ENCODE measurements at regions of chr19 and their contacts with region 1.

Region 1: GRCh38 chr19:44093931-44094765 is at the start of gene ZNF224:
- DNase-seq: peak; percentile 62 to 92 (median 74)
- ATAC-seq: peak; percentile 88
- H3K4me3 ChIP-seq: peak within 1 kb of the TSS; percentile 91
- H3K4me3 Mint-ChIP-seq: peak within 1 kb of the TSS; percentile 96
- H3K27ac ChIP-seq: peak within 1 kb of the TSS; percentile 30 to 79
- H3K27ac Mint-ChIP-seq: peak within 1 kb of the TSS; percentile 69
- H3K4me1 ChIP-seq: peaks cover 6% of the 10 kb centered on the region
- H3K4me1 Mint-ChIP-seq: peaks cover 24% of the 10 kb centered on the region
- H3K27me3 ChIP-seq: no peaks in the 10 kb centered on the region
- H3K27me3 Mint-ChIP-seq: no peaks in the 10 kb centered on the region
- CTCF ChIP-seq: no peak
- total RNA-seq, gene ZNF224: 21.3 to 23.9 TPM

Region 2: DNA sequence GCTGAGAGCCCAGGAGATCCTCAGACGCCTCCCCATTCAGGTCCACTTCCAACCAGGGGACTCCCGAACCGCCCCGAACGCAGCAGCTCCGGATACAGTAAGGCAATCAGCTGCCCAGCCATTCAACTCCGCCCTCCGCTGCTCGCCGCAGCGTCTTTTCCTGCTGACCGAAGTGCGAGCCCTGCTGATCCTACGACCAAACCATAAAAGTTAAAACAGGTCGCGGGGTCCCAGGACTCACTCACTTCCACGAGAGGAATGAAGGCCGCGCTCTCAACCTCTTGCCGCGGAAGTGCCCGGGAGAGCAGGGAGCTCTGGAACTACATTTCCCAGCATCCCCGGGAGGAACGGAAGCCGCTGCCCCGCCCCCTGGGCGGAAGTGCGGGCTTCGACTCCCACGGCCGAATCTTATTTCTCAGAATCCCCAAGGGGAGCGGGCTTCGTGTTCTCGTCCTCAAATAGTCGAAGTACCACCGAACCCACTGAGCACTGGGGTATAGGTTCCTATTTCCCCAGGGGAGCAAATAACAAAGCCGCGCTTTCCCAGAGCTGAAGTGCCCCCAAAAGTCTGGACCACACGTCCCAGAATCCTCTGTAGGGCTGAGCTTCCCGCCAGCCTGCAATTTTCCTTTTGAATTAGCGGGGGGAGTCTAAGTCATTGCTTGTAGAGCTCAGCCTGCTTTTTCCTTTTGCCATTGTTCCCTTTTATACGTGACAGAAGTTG is 159.0 kb before region 1 on chr19 and contains the start of gene ZNF45:
- CTCF ChIA-PET with region 1: no interaction called
- POLR2A ChIA-PET with region 1: interaction called, 10 read pairs
- intact Hi-C with region 1: loop called (anchors 2 to 5 kb)
- DNase-seq: peak; percentile 75 to 94 (median 82)
- ATAC-seq: peak; percentile 95
- H3K4me3 ChIP-seq: peak within 1 kb of the TSS; percentile 78
- H3K4me3 Mint-ChIP-seq: peak within 1 kb of the TSS; percentile 96
- H3K27ac ChIP-seq: peak within 1 kb of the TSS; percentile 56 to 64
- H3K27ac Mint-ChIP-seq: peak within 1 kb of the TSS; percentile 86
- H3K4me1 ChIP-seq: peaks cover 10% of the 10 kb centered on the region
- H3K4me1 Mint-ChIP-seq: peaks cover 25% of the 10 kb centered on the region
- H3K27me3 ChIP-seq: no peaks in the 10 kb centered on the region
- H3K27me3 Mint-ChIP-seq: no peaks in the 10 kb centered on the region
- CTCF ChIP-seq: no peak
- total RNA-seq, gene ZNF45: 4.0 to 4.6 TPM

Region 3: DNA sequence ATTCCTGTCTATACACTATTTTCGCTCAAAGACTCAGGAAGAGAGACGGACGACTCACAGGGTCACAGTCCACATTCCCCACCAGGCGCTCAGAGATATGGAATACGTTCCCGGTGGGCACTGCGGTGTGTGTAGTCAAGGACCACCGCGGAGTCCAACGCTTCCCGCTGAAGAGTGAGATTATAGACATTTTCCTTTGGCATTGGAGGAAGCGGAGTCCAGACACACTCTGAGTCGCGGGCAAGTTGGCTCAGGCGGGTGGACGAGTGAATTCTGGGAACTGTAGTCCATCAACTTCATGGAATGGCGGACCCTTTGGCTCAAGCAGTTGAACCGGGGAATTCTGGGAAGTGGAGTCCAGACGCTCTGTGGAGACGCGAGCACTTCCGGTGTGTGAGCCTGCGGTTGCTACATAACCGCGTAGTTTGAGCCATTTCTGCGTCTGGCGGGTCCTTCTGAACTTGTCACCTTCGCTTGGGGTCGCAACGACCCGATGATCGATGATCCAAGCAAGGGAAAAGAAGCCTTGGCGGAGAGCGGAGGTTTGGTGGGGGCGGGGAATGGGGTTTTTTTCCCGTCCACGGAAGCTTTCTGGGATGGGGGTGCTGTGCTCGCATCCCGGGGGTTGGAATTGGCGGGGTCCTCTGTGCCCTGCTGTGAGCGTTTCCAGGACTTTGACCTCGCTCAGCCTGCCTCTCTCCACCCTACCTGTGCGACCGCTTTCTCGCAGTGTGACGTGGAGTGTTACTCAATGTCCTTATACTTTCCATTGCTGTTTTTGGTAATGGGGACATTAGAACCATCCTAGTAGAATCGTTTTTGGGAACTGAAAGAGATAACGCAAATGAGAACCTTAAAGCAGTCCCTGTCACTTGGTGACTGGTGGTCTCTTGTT is 91.3 kb before region 1 on chr19 and contains the start of gene ZNF230:
- CTCF ChIA-PET with region 1: interaction called, 3 read pairs
- POLR2A ChIA-PET with region 1: no interaction called
- intact Hi-C with region 1: loop called (anchors 2 to 5 kb)
- DNase-seq: peak; percentile 56 to 96 (median 75)
- ATAC-seq: peak; percentile 97
- H3K4me3 ChIP-seq: peak within 1 kb of the TSS; percentile 84
- H3K4me3 Mint-ChIP-seq: peak within 1 kb of the TSS; percentile 100
- H3K27ac ChIP-seq: peak within 1 kb of the TSS; percentile 39 to 53
- H3K27ac Mint-ChIP-seq: peak within 1 kb of the TSS; percentile 90
- H3K4me1 ChIP-seq: peaks cover 18% of the 10 kb centered on the region
- H3K4me1 Mint-ChIP-seq: peaks cover 29% of the 10 kb centered on the region
- H3K27me3 ChIP-seq: no peaks in the 10 kb centered on the region
- H3K27me3 Mint-ChIP-seq: no peaks in the 10 kb centered on the region
- CTCF ChIP-seq: no peak
- total RNA-seq, gene ZNF230: 2.2 to 2.8 TPM

Region 4: DNA sequence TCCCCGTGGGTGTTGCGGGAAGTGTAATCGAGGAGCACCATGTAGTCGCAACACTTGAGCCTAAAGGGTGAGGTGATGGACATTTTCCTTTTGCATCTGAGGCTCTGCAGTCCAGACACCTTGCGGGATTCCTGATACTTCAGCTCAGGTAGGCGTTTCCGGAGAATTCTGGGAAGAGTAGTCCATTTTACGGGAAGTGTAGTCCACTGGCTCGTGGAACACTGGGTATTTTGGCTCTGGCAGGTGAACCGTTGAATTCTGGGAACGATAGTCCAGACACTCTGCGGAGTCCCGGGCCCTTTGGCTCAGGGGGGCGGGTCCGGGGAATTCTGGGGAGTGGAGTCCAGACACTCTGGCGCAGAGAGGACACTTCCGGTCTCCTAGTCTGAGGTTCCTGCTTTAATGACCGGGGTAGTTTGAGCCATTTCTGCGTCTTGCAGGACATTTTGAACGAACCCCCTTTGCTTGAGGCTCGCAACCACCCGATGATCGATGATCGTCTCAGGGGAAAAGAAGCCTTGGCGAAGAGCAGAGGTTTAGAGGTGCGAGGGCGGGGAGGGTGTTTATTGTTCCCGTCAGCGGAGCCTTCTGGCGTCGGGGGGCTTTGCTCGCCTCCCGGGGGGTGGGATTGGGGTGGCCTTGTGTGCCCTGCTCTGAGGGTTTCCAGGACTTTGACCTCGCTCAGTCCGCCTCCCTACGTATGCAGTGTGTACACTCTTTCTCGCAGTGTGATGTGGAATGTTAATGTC is 42.3 kb before region 1 on chr19 and contains the start of gene ZNF223:
- CTCF ChIA-PET with region 1: no interaction called
- POLR2A ChIA-PET with region 1: no interaction called
- intact Hi-C with region 1: loop called in 1 of 2 experiments (anchors 5 kb)
- DNase-seq: peak; percentile 30 to 85 (median 65)
- ATAC-seq: peak; percentile 79
- H3K4me3 ChIP-seq: peak within 1 kb of the TSS; percentile 61
- H3K4me3 Mint-ChIP-seq: peak within 1 kb of the TSS; percentile 93
- H3K27ac ChIP-seq: no peak within 1 kb of the TSS
- H3K27ac Mint-ChIP-seq: peak within 1 kb of the TSS; percentile 40
- H3K4me1 ChIP-seq: peaks cover 17% of the 10 kb centered on the region
- H3K4me1 Mint-ChIP-seq: peaks cover 33% of the 10 kb centered on the region
- H3K27me3 ChIP-seq: no peaks in the 10 kb centered on the region
- H3K27me3 Mint-ChIP-seq: peaks cover 19% of the 10 kb centered on the region
- CTCF ChIP-seq: no peak
- total RNA-seq, gene ZNF223: 0.67 to 1.1 TPM

Region 5: DNA sequence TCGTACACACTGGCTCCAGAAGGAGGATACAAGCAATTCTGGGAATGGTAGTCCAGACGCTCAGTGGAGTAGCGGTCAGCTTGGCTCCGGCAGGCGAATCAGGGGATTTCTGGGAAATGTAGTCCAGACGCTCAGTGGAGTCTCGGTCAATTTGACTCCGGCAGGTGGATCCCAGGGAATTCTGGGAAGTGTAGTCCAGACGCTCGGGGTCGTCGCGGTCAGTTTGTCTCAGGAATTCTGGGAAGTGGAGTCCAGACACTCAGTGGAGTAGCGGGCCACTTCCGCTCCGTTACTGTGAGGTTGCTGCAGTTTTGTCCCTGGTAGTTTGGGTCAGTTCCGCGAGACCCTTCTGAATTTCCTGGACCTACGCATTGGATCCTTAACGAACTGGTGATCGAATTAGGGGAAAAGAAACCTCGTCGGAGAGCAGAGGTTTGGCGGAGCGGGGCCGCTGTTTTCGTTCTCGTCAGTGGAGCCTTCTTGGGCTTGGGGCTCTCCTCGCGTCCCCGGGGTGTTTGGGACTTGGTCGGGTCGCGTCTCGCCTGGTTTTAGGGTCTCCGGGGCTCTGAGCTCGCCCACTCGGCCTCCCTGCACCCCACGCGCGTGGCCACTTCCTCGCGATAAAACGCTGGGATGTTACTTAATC is 19.1 kb after region 1 on chr19 and contains the start of gene ZNF225:
- CTCF ChIA-PET with region 1: interaction called, 8 read pairs
- POLR2A ChIA-PET with region 1: interaction called, 18 read pairs
- intact Hi-C with region 1: loop called in 1 of 2 experiments (anchors 2 kb)
- DNase-seq: peak; percentile 55 to 94 (median 72)
- ATAC-seq: peak; percentile 89
- H3K4me3 ChIP-seq: peak within 1 kb of the TSS; percentile 75
- H3K4me3 Mint-ChIP-seq: peak within 1 kb of the TSS; percentile 95
- H3K27ac ChIP-seq: peak within 1 kb of the TSS in 1 of 2 donors; percentile 29
- H3K27ac Mint-ChIP-seq: peak within 1 kb of the TSS; percentile 57
- H3K4me1 ChIP-seq: peaks cover 17% of the 10 kb centered on the region
- H3K4me1 Mint-ChIP-seq: peaks cover 37% of the 10 kb centered on the region
- H3K27me3 ChIP-seq: no peaks in the 10 kb centered on the region
- H3K27me3 Mint-ChIP-seq: no peaks in the 10 kb centered on the region
- CTCF ChIP-seq: no peak
- total RNA-seq, gene ZNF225: 0.71 to 0.73 TPM

Region 6: DNA sequence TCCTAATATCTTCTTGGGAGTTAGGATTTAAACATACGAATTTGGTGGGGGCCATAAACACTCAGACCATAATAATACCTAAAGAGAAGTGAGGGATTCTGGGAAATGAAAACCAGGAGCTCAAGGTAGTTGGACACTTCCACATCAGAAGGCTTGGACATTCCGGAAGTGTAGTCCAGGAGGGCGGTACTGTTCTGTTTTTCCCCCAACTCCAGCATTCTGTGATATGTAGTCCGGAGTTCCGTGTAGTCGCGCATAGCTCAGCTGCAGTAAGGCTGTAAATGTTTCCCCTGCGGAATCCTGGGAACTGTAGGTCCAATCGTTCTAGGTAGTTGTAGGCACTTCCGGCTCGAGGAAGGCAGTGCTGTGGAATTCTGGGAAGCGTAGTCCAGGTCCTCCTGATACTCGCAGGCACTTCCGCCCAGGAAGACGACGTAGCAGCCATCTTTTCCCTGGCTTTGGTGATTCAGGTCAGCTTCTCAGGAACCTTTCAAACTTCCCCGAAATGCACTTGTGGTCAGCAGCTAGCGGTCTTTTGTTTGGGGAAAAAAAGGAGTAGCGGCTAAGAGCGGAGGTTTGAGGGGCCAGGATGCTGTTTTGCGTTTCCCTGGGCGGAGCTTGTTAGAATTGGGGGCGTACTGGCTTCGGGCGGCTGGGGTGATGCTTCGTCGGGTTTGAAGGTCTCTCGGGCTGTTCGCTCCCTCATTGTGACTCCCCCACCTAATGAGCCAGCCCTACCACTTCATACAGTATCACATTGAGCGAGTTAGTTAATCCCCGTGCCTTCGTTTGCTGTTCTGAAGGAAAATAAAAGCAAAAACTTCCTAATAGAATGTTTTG is 70.7 kb after region 1 on chr19 and contains the start of gene ZNF226:
- CTCF ChIA-PET with region 1: interaction called, 3 read pairs
- POLR2A ChIA-PET with region 1: interaction called, 5 read pairs
- intact Hi-C with region 1: loop called in 1 of 2 experiments (anchors 1 kb)
- DNase-seq: peak; percentile 59 to 95 (median 71)
- ATAC-seq: peak; percentile 94
- H3K4me3 ChIP-seq: peak within 1 kb of the TSS; percentile 86
- H3K4me3 Mint-ChIP-seq: peak within 1 kb of the TSS; percentile 99
- H3K27ac ChIP-seq: peak within 1 kb of the TSS; percentile 72 to 88
- H3K27ac Mint-ChIP-seq: peak within 1 kb of the TSS; percentile 98
- H3K4me1 ChIP-seq: peaks cover 19% of the 10 kb centered on the region
- H3K4me1 Mint-ChIP-seq: peaks cover 32% of the 10 kb centered on the region
- H3K27me3 ChIP-seq: no peaks in the 10 kb centered on the region
- H3K27me3 Mint-ChIP-seq: no peaks in the 10 kb centered on the region
- CTCF ChIP-seq: no peak
- total RNA-seq, gene ZNF226: 7.9 to 9.1 TPM

Region 7: GRCh38 chr19:44212250-44212865 is 118.2 kb after region 1 on chr19 and contains the start of gene ZNF227:
- CTCF ChIA-PET with region 1: no interaction called
- POLR2A ChIA-PET with region 1: interaction called, 11 read pairs
- intact Hi-C with region 1: loop called in 1 of 2 experiments (anchors 5 kb)
- DNase-seq: peak; percentile 59 to 88 (median 76)
- ATAC-seq: peak; percentile 96
- H3K4me3 ChIP-seq: peak within 1 kb of the TSS; percentile 65
- H3K4me3 Mint-ChIP-seq: peak within 1 kb of the TSS; percentile 96
- H3K27ac ChIP-seq: peak within 1 kb of the TSS; percentile 70 to 73
- H3K27ac Mint-ChIP-seq: peak within 1 kb of the TSS; percentile 90
- H3K4me1 ChIP-seq: peaks cover 9% of the 10 kb centered on the region
- H3K4me1 Mint-ChIP-seq: peaks cover 48% of the 10 kb centered on the region
- H3K27me3 ChIP-seq: no peaks in the 10 kb centered on the region
- H3K27me3 Mint-ChIP-seq: no peaks in the 10 kb centered on the region
- CTCF ChIP-seq: no peak
- total RNA-seq, gene ZNF227: 16.2 to 17.2 TPM